ENCODE measurements at regions of chr7 and their contacts with region 1.

Region 1: GRCh38 chr7:143239813-143240212 is 18.0 kb downstream of the TAS2R40 start:
- DNase-seq: no peak
- H3K4me3 ChIP-seq: no peak overlapping the region
- H3K27ac ChIP-seq: peak overlapping the region in 2 of 5 donors; percentile 52 to 65
- H3K4me1 ChIP-seq: peaks cover 0 to 24% (median 10%) of the 10 kb centered on the region in 4 donors
- H3K27me3 ChIP-seq: no peaks in the 10 kb centered on the region
- CTCF ChIP-seq: no peak
- EP300 ChIP-seq: no peak
- POLR2A ChIP-seq: no peak

Region 2: DNA sequence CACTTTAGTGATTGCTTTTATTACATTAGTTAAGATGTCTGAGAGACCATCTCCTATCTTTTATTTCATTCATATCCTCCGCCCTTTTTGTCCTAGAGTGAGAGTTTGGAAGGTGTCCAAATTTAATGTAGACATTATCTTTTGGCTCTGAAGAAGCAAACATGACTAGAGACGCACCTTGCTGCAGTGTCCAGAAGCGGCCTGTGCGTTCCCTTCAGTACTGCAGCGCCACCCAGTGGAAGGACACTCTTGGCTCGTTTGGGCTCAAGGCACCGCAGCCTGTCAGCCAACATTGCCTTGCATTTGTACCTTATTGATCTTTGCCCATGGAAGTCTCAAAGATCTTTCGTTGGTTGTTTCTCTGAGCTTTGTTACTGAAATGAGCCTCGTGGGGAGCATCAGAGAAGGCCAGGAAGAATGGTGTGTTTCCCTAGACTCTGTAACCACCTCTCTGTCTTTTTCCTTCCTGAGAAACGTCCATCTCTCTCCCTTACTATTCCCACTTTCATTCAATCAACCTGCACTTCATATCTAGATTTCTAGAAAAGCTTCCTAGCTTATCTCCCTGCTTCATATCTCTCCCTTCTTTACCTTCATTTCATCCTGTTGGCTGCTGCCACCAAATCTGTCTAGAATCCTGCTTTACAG is 65.7 kb after region 1 on chr7:
- intact Hi-C with region 1: loop called (anchors 5 kb)
- DNase-seq: peak; percentile 86 to 93
- H3K4me3 ChIP-seq: no peak overlapping the region
- H3K27ac ChIP-seq: no peak overlapping the region
- H3K4me1 ChIP-seq: peaks cover 2 to 29% (median 12%) of the 10 kb centered on the region in 4 donors
- H3K27me3 ChIP-seq: no peaks in the 10 kb centered on the region
- CTCF ChIP-seq: peak in 5 of 7 experiments; percentile 53 to 89 (median 76)
- EP300 ChIP-seq: no peak
- POLR2A ChIP-seq: no peak

Region 3: DNA sequence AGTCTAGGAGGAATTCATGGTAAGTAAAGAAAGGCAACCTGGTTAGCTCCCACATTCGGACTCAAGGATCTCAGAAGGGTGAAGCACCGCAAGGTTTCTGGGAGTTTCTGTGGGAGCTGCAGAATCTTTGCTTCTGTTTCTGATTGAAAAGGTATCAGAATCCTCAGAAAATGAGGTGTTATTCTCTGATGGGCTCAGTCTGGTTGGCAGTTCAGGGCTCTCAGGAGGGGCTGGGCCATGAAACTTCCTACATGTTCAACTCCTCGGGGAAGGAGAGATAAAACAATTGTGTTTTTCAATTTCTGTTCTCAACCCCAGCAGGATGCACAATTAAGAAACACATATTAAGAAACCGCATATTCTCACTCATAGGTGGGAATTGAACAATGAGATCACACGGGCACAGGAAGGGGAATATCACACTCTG is 1015.7 kb after region 1 on chr7:
- intact Hi-C with region 1: no loop called
- DNase-seq: no peak
- H3K4me3 ChIP-seq: no peak overlapping the region
- H3K27ac ChIP-seq: no peak overlapping the region
- H3K4me1 ChIP-seq: no peaks in the 10 kb centered on the region
- H3K27me3 ChIP-seq: no peaks in the 10 kb centered on the region
- CTCF ChIP-seq: no peak
- EP300 ChIP-seq: no peak
- POLR2A ChIP-seq: no peak